A673 (cell line): ENCODE measurements at regions of chr5 and their contacts with region 1.

Region 1: DNA sequence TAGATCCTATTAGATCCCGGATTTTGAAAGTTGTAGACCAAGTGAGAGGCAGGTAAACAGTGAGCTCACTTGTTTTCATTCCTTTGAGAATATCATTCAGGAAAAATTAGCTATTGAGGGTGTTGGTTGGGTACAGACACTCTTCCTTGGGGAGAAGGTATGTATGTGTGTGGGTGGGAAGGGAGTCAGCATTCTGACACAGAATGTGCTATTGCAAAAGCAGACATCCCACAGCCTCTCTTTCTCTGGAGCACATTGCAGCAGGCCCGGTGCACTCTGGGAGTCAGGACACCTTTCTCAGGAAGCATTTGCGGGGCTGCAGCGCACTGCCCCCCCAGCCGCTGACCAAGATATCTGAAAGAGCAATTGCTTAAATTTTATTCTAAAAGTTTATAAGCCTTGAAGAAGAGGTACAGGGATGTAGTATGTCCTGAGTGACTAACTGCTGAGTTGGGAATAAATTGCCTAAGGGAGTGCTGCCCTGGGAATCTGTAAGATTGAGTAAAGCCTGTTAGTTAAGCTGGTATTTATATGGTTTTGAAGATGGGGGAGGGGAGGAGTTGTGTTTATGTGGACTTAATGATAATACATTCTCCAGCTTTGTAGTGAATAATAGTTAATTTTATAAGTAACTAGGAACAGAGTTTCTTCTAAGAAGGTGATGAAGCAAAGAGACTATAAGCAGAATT is 5.2 kb downstream of the TNFAIP8 start:
- DNase-seq: no peak
- H3K4me3 ChIP-seq: no peak overlapping the region
- H3K27ac ChIP-seq: no peak overlapping the region
- H3K4me1 ChIP-seq: peaks cover 44% of the 10 kb centered on the region
- H3K27me3 ChIP-seq: no peaks in the 10 kb centered on the region
- CTCF ChIP-seq: no peak

Region 2: GRCh38 chr5:121285801-121286521 is 1924.9 kb after region 1 on chr5:
- CTCF ChIA-PET with region 1: no interaction called
- POLR2A ChIA-PET with region 1: interaction called, 12 read pairs
- intact Hi-C with region 1: no loop called
- DNase-seq: no peak
- H3K4me3 ChIP-seq: no peak overlapping the region
- H3K27ac ChIP-seq: no peak overlapping the region
- H3K4me1 ChIP-seq: no peaks in the 10 kb centered on the region
- H3K27me3 ChIP-seq: no peaks in the 10 kb centered on the region
- CTCF ChIP-seq: no peak